Activated naive CD8-positive, alpha-beta T cell treated with anti-CD3 and anti-CD28 coated beads, Interleukin-2, amount 10 ng/mL, durations not matched to agents 7 days and 5 days (primary cell): ENCODE measurements at regions of chr3 and their contacts with region 1.

Region 1: GRCh38 chr3:111667621-111668239 is 72.6 kb upstream of the ZBED2 start:
- DNase-seq: no peak
- ATAC-seq: peak; percentile 92
- H3K4me3 Mint-ChIP-seq: peak overlapping the region; percentile 76
- H3K27ac Mint-ChIP-seq: peak overlapping the region; percentile 93
- H3K4me1 Mint-ChIP-seq: peaks cover 56% of the 10 kb centered on the region
- H3K27me3 Mint-ChIP-seq: no peaks in the 10 kb centered on the region

Region 2: GRCh38 chr3:111636366-111636885 is 31.3 kb before region 1 on chr3:
- POLR2A ChIA-PET with region 1: no interaction called
- DNase-seq: no peak
- ATAC-seq: no peak
- H3K4me3 Mint-ChIP-seq: no peak overlapping the region
- H3K27ac Mint-ChIP-seq: no peak overlapping the region
- H3K4me1 Mint-ChIP-seq: no peaks in the 10 kb centered on the region
- H3K27me3 Mint-ChIP-seq: no peaks in the 10 kb centered on the region

Region 3: DNA sequence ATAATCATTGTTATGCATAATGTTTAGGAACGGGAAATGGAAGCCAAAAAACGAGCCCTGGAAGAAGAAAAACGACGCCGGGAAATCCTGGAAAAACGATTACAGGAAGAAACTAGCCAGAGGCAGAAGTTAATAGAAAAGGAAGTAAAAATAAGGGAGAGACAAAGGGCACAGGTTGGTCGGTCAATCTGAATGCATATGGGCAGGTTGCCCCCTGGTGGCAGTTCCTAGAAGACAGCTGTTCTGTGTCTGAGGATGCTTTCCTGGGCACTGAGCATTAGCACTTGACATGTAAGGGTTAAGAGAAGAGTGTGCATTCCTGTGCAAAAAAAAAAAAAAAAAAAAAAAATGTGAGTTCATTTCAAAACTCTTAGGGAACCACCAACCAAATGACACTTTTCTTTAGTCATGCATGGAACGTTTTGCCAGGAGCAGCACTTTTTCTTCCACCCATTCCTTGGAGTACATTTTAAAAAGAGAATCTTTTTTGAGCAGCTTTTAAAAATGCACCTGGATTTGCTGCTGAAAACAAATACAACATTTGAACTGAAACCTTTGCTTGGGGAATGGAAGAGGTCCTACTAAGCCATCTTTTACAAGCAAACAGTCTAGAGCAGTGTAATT is 300.0 kb after region 1 on chr3:
- POLR2A ChIA-PET with region 1: no interaction called
- DNase-seq: peak; percentile 71
- ATAC-seq: peak; percentile 94
- H3K4me3 Mint-ChIP-seq: peak overlapping the region; percentile 6
- H3K27ac Mint-ChIP-seq: no peak overlapping the region
- H3K4me1 Mint-ChIP-seq: peaks cover 6% of the 10 kb centered on the region
- H3K27me3 Mint-ChIP-seq: peaks cover 4% of the 10 kb centered on the region

Region 4: GRCh38 chr3:111978493-111979433 is 311.0 kb after region 1 on chr3 and contains the start of gene ABHD10:
- POLR2A ChIA-PET with region 1: interaction called, 11 read pairs
- DNase-seq: peak; percentile 95
- ATAC-seq: peak; percentile 97
- H3K4me3 Mint-ChIP-seq: peak within 1 kb of the TSS; percentile 81
- H3K27ac Mint-ChIP-seq: peak within 1 kb of the TSS; percentile 91
- H3K4me1 Mint-ChIP-seq: peaks cover 28% of the 10 kb centered on the region
- H3K27me3 Mint-ChIP-seq: peaks cover 5% of the 10 kb centered on the region
- total RNA-seq, gene ABHD10: 39.4 to 40.4 TPM